Prostate gland (tissue), 2 donors: ENCODE measurements at regions of chr1 and their contacts with region 1.

Region 1: DNA sequence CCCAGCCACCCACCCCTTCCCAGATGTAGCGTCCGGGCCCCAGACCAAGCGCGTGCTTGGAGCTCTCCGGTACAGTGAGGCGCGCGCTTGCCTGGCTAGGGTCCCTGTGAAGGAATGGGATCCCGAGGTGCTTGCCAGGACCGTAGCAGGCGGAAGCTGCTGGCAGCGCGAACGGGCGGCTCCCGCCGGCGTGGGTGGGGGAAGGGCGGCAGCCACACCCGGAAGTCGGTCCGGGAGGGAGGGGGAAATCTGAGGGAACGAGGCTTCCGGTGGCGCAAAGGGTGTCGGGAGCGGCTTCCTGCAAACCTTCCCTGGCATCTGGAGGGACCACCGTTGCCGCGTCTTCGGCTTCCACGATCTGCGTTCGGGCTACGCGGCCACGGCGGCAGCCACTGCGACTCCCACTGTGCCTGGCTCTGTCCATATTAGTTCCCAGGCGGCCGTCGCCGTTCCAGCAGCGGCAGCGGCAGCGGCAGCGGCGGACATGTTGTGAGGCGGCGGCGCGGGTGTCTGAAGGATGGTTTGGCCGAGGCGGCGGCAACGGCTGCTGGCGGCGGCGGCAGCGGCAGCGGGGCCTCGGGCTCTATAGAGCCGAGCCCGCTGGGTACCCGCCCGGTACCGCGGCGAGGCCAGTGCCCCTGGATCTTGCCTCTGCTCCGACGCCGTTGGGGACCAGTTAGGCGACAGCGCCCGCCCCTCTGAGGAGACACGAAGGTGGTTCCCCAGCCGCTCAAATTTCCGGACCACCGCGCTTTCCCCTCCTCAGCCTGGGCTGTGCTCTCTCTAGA is at the start of gene DR1:
- DNase-seq: peak; percentile 94
- H3K4me3 ChIP-seq: peak within 1 kb of the TSS; percentile 90 to 95
- H3K27ac ChIP-seq: peak within 1 kb of the TSS; percentile 90 to 95
- H3K4me1 ChIP-seq: no peaks in the 10 kb centered on the region
- H3K27me3 ChIP-seq: no peaks in the 10 kb centered on the region
- CTCF ChIP-seq: no peak
- POLR2A ChIP-seq: peak; percentile 85
- total RNA-seq, gene DR1: 49.0 to 53.6 TPM

Region 2: DNA sequence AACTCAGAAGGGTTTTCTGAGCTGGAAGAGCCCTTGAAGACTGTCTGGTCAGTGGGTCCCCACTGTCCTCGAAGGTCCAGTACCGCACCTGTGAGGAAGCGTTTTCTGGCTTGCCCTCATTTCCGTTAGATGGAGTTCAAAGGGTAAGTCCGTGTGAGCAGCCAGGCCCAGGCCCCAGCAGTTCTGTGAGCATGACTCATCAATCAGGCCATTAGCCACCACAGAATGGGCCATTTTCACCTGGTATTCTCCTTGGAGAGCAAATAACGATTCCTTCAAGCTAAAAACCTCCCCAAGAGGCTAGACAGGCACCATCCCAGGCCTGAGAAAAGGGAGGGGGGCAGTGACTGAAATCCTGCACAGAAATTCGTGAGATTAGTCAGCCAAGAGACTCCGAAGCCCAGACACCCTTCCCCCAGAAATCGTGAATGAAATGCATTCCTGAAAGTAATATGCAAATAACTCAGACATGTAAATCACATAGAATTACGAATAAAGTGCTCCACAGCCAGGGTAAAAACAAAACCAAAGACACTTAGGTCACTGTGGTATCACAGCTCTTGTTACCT is 269.8 kb after region 1 on chr1:
- intact Hi-C with region 1: loop called (anchors 10 kb)
- DNase-seq: no peak
- H3K4me3 ChIP-seq: no peak overlapping the region
- H3K27ac ChIP-seq: no peak overlapping the region
- H3K4me1 ChIP-seq: no peaks in the 10 kb centered on the region
- H3K27me3 ChIP-seq: no peaks in the 10 kb centered on the region
- CTCF ChIP-seq: no peak
- POLR2A ChIP-seq: no peak